CD4-positive, alpha-beta T cell (primary cell): ENCODE measurements at regions of chr10 and their contacts with region 1.

Region 1: DNA sequence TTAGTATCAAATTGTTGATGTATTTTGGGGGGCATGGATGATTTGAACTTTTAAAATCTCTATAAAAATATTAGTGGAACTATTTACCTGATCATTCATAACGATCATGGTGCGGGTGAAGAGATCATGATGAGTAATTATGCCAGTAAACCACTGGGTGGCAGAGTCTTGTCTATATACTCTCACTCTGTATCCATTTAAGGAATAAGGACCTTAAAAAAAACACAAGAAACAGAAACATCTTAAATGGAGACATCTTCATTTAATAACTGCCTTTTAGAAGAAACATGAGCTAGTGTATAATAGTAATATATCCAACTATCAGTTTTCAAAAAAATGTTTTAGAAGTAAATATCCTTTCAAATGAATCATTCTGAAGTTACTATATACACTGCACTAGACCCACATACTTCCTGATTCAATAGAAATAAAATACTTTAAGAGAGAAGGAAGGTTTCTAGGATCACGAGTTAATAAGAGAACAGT is 84.0 kb downstream of the NRBF2 start:
- DNase-seq: peak in 4 of 14 experiments; percentile 32 to 75 (median 74)
- ATAC-seq: peak; percentile 92
- H3K4me3 ChIP-seq: no peak overlapping the region
- H3K4me3 Mint-ChIP-seq: no peak overlapping the region
- H3K27ac ChIP-seq: no peak overlapping the region
- H3K27ac Mint-ChIP-seq: peak overlapping the region; percentile 40
- H3K4me1 ChIP-seq: peaks cover 6% of the 10 kb centered on the region
- H3K4me1 Mint-ChIP-seq: peaks cover 59% of the 10 kb centered on the region
- H3K27me3 ChIP-seq: no peaks in the 10 kb centered on the region
- H3K27me3 Mint-ChIP-seq: no peaks in the 10 kb centered on the region
- CTCF ChIP-seq: peak; percentile 89

Region 2: DNA sequence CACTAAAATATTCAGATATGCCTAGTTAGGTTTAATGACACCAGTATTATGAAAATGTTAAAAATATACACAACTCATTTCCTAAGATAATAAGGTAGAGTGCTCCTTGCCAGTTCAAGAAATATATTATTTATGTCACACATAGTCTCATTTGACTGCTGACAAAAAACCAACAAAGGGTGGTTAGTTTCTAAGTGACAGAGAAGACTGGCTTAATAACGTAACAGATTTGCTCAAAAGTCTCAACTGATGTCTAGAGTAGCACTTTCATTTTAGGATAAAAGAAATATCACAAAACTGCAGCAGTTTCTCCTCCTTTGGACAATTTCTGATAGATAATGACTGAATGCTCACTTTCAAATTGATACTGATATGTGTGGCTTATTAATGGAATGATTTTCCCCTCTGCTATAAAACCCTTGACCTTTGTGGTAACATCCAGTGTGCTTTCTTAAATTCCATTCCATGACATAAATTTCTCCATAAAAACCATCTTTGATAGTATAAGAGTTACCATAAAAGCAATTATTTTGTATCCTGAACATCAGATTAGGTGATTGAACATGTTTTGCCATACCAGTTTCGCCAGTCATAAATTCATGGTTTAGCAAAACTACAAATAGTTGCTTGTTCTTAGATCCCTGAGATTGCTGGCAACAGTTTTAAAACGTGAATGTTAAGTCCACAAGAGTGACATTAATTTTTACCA is 10.2 kb after region 1 on chr10:
- CTCF ChIA-PET with region 1: interaction called, 6 read pairs
- POLR2A ChIA-PET with region 1: no interaction called
- intact Hi-C with region 1: loop called in 1 of 2 experiments (anchors 1 kb)
- DNase-seq: peak in 3 of 14 experiments; percentile 42 to 51 (median 43)
- ATAC-seq: peak; percentile 19
- H3K4me3 ChIP-seq: no peak overlapping the region
- H3K4me3 Mint-ChIP-seq: peak overlapping the region; percentile 40
- H3K27ac ChIP-seq: peak overlapping the region in 1 of 2 donors; percentile 41
- H3K27ac Mint-ChIP-seq: peak overlapping the region; percentile 84
- H3K4me1 ChIP-seq: peaks cover 24% of the 10 kb centered on the region
- H3K4me1 Mint-ChIP-seq: peaks cover 81% of the 10 kb centered on the region
- H3K27me3 ChIP-seq: no peaks in the 10 kb centered on the region
- H3K27me3 Mint-ChIP-seq: no peaks in the 10 kb centered on the region
- CTCF ChIP-seq: no peak

Region 3: GRCh38 chr10:63236113-63236935 is 19.2 kb after region 1 on chr10:
- CTCF ChIA-PET with region 1: interaction called, 5 read pairs
- POLR2A ChIA-PET with region 1: no interaction called
- intact Hi-C with region 1: loop called in 1 of 2 experiments (anchors 2 kb)
- DNase-seq: peak in 3 of 14 experiments; percentile 56 to 65 (median 60)
- ATAC-seq: peak; percentile 73
- H3K4me3 ChIP-seq: no peak overlapping the region
- H3K4me3 Mint-ChIP-seq: peak overlapping the region; percentile 11
- H3K27ac ChIP-seq: no peak overlapping the region
- H3K27ac Mint-ChIP-seq: peak overlapping the region; percentile 20
- H3K4me1 ChIP-seq: peaks cover 21% of the 10 kb centered on the region
- H3K4me1 Mint-ChIP-seq: peaks cover 63% of the 10 kb centered on the region
- H3K27me3 ChIP-seq: no peaks in the 10 kb centered on the region
- H3K27me3 Mint-ChIP-seq: no peaks in the 10 kb centered on the region
- CTCF ChIP-seq: no peak

Region 4: GRCh38 chr10:63250032-63250431 is 32.9 kb after region 1 on chr10:
- CTCF ChIA-PET with region 1: no interaction called
- POLR2A ChIA-PET with region 1: no interaction called
- intact Hi-C with region 1: no loop called
- DNase-seq: no peak
- ATAC-seq: no peak
- H3K4me3 ChIP-seq: no peak overlapping the region
- H3K4me3 Mint-ChIP-seq: no peak overlapping the region
- H3K27ac ChIP-seq: no peak overlapping the region
- H3K27ac Mint-ChIP-seq: no peak overlapping the region
- H3K4me1 ChIP-seq: peaks cover 13% of the 10 kb centered on the region
- H3K4me1 Mint-ChIP-seq: peaks cover 87% of the 10 kb centered on the region
- H3K27me3 ChIP-seq: no peaks in the 10 kb centered on the region
- H3K27me3 Mint-ChIP-seq: no peaks in the 10 kb centered on the region
- CTCF ChIP-seq: no peak

Region 5: DNA sequence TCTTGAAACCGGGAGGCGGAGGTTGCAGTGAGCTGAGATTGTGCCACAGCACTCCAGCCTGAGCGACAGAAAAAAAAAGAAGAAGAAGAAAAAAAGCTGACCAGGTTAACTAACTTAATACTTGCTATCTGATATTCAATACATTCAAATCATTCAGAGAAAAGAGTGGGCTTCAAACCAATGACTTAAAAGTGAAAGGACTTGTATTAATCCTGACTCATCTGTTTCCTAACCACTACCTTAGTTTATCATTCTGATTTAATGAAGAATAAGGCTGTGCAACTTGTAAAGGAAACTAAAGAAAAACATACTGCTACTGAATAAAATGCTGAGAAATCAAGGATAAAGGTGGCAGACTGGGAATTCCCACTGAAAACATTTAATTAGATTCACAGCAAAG is 44.3 kb after region 1 on chr10:
- CTCF ChIA-PET with region 1: interaction called, 3 read pairs
- POLR2A ChIA-PET with region 1: interaction called, 4 read pairs
- intact Hi-C with region 1: loop called in 1 of 2 experiments (anchors 5 kb)
- DNase-seq: peak in 1 of 14 experiments; percentile 21
- ATAC-seq: no peak
- H3K4me3 ChIP-seq: no peak overlapping the region
- H3K4me3 Mint-ChIP-seq: peak overlapping the region; percentile 48
- H3K27ac ChIP-seq: no peak overlapping the region
- H3K27ac Mint-ChIP-seq: peak overlapping the region; percentile 15
- H3K4me1 ChIP-seq: peaks cover 24% of the 10 kb centered on the region
- H3K4me1 Mint-ChIP-seq: peaks cover 75% of the 10 kb centered on the region
- H3K27me3 ChIP-seq: no peaks in the 10 kb centered on the region
- H3K27me3 Mint-ChIP-seq: no peaks in the 10 kb centered on the region
- CTCF ChIP-seq: no peak

Region 6: GRCh38 chr10:63465293-63466143 is 248.4 kb after region 1 on chr10 and contains the start of gene JMJD1C:
- CTCF ChIA-PET with region 1: no interaction called
- POLR2A ChIA-PET with region 1: no interaction called
- intact Hi-C with region 1: loop called in 1 of 2 experiments (anchors 5 kb)
- DNase-seq: peak; percentile 37 to 81 (median 52)
- ATAC-seq: peak; percentile 64
- H3K4me3 ChIP-seq: peak within 1 kb of the TSS; percentile 91
- H3K4me3 Mint-ChIP-seq: peak within 1 kb of the TSS; percentile 97
- H3K27ac ChIP-seq: peak within 1 kb of the TSS; percentile 49 to 57
- H3K27ac Mint-ChIP-seq: peak within 1 kb of the TSS; percentile 85
- H3K4me1 ChIP-seq: peaks cover 6% of the 10 kb centered on the region
- H3K4me1 Mint-ChIP-seq: peaks cover 67% of the 10 kb centered on the region
- H3K27me3 ChIP-seq: no peaks in the 10 kb centered on the region
- H3K27me3 Mint-ChIP-seq: no peaks in the 10 kb centered on the region
- CTCF ChIP-seq: no peak
- total RNA-seq, gene JMJD1C: 389 to 399 TPM

Region 7: GRCh38 chr10:63521416-63522276 is 304.5 kb after region 1 on chr10:
- CTCF ChIA-PET with region 1: interaction called, 3 read pairs
- POLR2A ChIA-PET with region 1: interaction called, 4 read pairs
- intact Hi-C with region 1: loop called in 1 of 2 experiments (anchors 2 kb)
- DNase-seq: peak; percentile 18 to 87 (median 40)
- ATAC-seq: peak; percentile 71
- H3K4me3 ChIP-seq: peak overlapping the region; percentile 87
- H3K4me3 Mint-ChIP-seq: peak overlapping the region; percentile 87
- H3K27ac ChIP-seq: peak overlapping the region; percentile 68 to 81
- H3K27ac Mint-ChIP-seq: peak overlapping the region; percentile 86
- H3K4me1 ChIP-seq: peaks cover 20% of the 10 kb centered on the region
- H3K4me1 Mint-ChIP-seq: peaks cover 71% of the 10 kb centered on the region
- H3K27me3 ChIP-seq: no peaks in the 10 kb centered on the region
- H3K27me3 Mint-ChIP-seq: no peaks in the 10 kb centered on the region
- CTCF ChIP-seq: no peak

Region 8: DNA sequence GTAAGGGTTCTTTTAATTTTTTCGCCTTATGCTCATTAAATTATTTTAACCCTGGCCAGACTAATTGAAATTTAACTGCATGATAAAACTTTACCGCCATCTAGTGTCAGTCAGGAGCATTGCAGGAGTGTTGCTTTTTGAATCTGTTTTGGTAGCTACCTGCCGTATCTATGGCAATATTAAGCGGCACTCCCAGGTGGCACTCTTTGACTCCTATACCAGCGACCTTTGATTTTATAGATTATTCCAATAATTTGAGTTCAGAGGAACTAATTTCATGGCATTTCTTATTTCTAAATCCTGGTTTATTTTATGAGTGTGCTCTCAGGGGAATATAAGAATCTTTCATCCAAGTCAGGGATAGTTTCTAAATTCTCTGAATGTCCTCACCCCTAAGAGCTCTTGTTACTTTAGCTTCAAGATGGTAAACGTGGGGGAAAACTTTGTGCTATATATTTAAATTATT is 502.9 kb after region 1 on chr10:
- CTCF ChIA-PET with region 1: interaction called, 12 read pairs
- POLR2A ChIA-PET with region 1: interaction called, 3 read pairs
- intact Hi-C with region 1: loop called (anchors 1 to 2 kb)
- DNase-seq: peak in 13 of 14 experiments; percentile 9 to 79 (median 33)
- ATAC-seq: peak; percentile 88
- H3K4me3 ChIP-seq: no peak overlapping the region
- H3K4me3 Mint-ChIP-seq: no peak overlapping the region
- H3K27ac ChIP-seq: no peak overlapping the region
- H3K27ac Mint-ChIP-seq: peak overlapping the region; percentile 19
- H3K4me1 ChIP-seq: peaks cover 4% of the 10 kb centered on the region
- H3K4me1 Mint-ChIP-seq: peaks cover 10% of the 10 kb centered on the region
- H3K27me3 ChIP-seq: peaks cover 0 to 10% of the 10 kb centered on the region in 2 experiments
- H3K27me3 Mint-ChIP-seq: peaks cover 4% of the 10 kb centered on the region
- CTCF ChIP-seq: peak; percentile 99